ENCODE measurements at regions of chr6 and their contacts with region 1.

Region 1: GRCh38 chr6:149431905-149432775 is 32.1 kb downstream of the SUMO4 start:
- DNase-seq: peak; percentile 96

Region 2: GRCh38 chr6:148578245-148578732 is 853.9 kb before region 1 on chr6:
- intact Hi-C with region 1: loop called in 1 of 2 experiments (anchors 10 kb)
- DNase-seq: peak; percentile 92

Region 3: GRCh38 chr6:149028767-149029405 is 403.3 kb before region 1 on chr6:
- intact Hi-C with region 1: loop called in 1 of 2 experiments (anchors 5 kb)
- DNase-seq: no peak

Region 4: GRCh38 chr6:149082286-149082707 is 349.8 kb before region 1 on chr6:
- intact Hi-C with region 1: loop called (anchors 2 to 5 kb)
- DNase-seq: peak; percentile 90

Region 5: GRCh38 chr6:149246691-149247384 is 185.3 kb before region 1 on chr6:
- intact Hi-C with region 1: no loop called
- DNase-seq: no peak

Measured in posterior vena cava (tissue), 2 donors.